ENCODE measurements at regions of chr20 and their contacts with region 1.

Region 1: DNA sequence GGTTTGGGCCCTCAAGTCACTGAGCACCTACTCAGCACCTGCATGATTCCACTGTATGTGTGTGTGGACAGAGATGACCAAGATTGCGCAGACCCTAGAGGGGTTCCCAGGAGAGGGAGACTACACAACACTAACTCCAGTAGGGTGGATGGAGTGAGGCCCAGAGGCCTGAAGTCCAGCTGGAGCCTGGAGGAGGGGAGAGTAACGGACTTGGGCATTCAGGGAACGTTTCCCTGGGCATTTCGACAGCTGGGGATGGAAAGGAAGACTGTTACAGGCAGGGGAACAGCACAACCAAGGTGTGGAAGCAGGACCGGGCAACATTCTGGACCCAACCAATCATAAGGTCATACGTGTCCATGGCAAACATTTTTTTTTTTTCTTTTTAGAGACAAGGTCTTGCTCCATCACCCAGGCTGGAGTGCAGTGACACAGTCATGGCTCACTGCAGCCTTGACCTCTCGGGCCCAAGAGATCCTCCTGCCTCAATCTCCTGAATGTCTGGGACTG is 11.1 kb upstream of the CEBPB start:
- DNase-seq: no peak
- H3K4me3 ChIP-seq: no peak overlapping the region
- H3K27ac ChIP-seq: no peak overlapping the region
- H3K27me3 ChIP-seq: no peaks in the 10 kb centered on the region
- CTCF ChIP-seq: no peak

Region 2: DNA sequence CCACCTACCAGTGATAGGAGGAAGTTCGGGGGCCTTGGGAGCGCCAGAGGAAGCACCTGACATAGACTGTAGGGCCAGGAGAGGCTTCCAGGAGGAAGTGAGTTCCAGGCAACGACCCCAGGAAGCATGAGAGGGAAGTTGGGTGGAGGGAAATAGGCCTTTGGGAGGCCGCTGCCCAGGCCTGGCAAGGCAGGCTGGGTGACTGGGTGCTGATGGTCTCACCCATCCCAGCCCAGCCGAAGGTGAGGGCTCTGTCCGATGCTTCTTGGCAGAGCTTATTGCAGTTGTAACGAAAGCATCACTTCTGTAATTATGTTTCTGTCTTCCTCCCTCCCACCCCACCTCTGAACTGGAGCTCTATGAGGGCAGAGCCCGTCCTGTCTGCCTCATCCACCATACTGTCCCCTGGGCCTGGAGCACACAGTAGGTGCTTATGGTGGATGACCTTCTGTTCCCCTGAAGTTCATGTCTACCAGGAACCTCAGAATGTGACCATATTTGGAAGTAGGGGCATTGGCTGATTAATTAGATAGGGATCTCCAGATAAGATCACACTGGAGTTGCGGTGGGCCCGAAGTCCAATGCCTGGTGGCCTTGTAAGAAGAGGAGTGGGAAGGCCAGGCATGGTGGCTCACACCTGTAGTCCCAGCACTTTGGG is 120.7 kb before region 1 on chr20:
- CTCF ChIA-PET with region 1: no interaction called
- POLR2A ChIA-PET with region 1: no interaction called
- DNase-seq: no peak
- H3K4me3 ChIP-seq: no peak overlapping the region
- H3K27ac ChIP-seq: no peak overlapping the region
- H3K27me3 ChIP-seq: no peaks in the 10 kb centered on the region
- CTCF ChIP-seq: no peak

Region 3: GRCh38 chr20:50115591-50116372 is 63.8 kb before region 1 on chr20:
- CTCF ChIA-PET with region 1: interaction called, 19 read pairs
- POLR2A ChIA-PET with region 1: interaction called, 4 read pairs
- DNase-seq: peak; percentile 92
- H3K4me3 ChIP-seq: peak overlapping the region; percentile 65
- H3K27ac ChIP-seq: peak overlapping the region; percentile 31
- H3K27me3 ChIP-seq: no peaks in the 10 kb centered on the region
- CTCF ChIP-seq: no peak

Region 4: DNA sequence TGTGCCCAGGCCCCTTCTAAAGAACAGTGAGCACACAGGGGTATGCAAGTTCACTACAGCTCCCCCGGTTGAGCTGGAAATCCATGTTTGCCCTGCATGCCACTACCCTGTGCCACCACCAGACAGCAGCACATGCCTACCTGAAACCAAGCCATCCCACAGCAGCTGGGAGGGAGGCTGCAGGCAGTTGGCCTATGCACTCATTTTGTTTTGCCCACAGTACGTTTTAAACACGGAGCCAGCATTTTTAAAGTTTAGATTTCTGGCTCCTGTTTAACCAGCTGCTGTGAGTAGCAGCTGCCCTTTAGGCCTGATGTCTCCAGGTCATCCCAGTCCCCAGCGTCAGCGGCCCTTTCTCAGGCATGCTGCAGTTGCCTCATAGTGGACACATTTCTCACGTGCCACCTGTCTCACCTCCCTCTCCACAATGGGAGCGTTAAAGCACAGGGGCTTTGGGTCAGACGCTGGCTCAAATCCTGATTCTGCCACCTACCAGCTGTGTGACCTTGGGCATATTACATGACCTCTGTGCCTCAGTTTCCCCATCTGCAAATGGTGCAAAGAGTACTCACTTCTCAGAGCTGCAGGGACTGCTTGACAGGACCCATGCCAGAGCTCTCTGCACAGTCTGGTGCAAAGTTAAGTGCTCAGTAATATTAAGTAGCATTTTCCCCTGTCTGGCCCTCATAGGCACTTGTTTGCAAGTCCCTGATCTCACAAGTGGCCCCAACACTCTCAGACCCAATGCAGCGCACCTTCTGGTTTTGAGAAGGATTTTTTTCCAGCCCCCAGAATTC is 58.5 kb before region 1 on chr20:
- CTCF ChIA-PET with region 1: interaction called, 19 read pairs
- POLR2A ChIA-PET with region 1: interaction called, 4 read pairs
- DNase-seq: peak; percentile 36
- H3K4me3 ChIP-seq: no peak overlapping the region
- H3K27ac ChIP-seq: no peak overlapping the region
- H3K27me3 ChIP-seq: no peaks in the 10 kb centered on the region
- CTCF ChIP-seq: peak; percentile 84

Region 5: DNA sequence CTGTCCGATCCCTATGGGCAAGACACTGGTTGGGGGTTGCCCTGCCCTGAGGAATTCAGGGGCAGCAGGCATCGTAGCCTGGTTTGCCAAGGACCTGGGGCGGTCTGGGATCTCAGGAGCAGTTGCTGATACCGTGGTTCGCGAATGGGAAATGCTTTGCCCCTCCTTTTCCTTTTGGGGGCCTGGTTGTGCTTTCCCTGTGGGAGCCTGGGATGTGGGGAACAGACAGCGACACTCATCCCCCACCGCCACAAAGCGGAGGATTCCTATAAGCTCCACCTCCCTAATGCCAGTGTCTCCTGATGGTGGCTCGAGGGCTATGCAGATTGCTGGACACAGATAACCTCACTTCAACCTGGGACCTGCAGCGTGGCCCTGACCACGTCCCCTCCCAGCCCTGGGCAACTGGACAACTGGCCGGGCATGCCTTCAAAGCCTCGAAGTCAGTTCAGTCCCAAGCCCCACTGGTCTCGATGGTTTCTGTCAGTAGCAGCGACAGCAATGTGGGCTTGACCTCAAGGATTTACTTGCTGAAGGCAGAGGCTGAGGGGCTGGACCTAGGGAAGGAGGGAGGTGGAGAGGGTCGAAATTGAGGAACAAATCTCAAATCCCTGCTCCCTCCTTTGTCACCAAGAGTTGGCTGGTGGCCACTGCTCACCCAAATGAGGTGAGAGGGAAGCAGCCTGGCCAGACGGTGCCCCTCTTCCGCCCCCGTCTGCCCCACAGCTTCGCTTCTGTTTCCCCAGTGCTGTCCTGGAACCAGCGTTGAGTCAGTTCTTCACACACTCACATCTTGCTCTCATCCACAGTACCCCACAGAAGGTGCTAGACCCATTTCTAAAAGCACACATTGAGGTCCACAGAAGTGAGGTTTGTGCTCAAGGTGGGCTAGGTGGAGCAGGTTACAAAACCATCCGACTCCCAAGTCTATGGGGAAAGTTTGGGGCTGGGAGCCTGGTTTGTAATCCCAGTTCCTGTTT is 14.6 kb after region 1 on chr20:
- CTCF ChIA-PET with region 1: no interaction called
- POLR2A ChIA-PET with region 1: no interaction called
- DNase-seq: no peak
- H3K4me3 ChIP-seq: peak overlapping the region; percentile 97
- H3K27ac ChIP-seq: peak overlapping the region; percentile 96
- H3K27me3 ChIP-seq: no peaks in the 10 kb centered on the region
- CTCF ChIP-seq: no peak

Region 6: DNA sequence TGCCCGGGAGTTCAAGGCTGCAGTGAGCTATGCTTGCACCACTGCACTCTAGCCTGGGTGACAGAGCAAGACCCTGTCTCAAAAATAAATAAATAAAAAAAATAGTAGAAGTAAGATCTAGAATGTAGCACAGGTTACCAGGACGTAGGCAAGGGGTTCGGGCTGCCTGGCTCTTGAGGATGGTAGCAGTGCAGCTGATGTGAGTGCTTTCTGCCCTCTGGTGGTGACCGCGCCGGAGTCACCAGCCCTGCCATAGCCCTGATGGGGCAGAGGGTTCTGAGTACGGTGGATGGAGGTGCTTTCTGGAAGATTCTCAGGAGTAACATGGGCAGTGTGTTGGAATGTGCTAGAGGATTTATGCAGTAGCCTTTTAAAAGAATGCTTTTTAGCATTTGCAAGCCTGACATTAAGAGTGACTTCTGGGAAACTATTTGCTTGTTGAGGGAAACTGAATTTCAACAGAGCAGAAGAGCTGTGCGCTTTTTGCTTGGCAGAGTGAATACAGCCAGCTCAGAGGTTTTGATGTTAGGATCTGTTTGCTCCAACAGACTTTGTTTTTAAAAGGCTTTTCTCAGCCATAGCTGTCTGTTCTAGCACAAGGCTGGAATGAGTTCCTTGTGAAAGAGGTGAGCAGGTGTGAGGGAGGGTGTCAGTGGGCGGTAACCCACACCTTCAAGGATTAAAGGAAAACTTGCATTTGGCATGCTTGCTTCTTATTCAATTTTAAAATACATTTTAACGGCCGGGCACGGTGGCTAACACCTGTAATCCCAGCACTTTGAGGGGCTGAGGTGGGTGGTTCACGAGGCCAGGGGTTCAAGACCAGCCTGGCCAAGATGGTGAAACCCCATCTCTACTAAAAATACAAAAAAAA is 396.5 kb after region 1 on chr20:
- CTCF ChIA-PET with region 1: interaction called, 11 read pairs
- POLR2A ChIA-PET with region 1: no interaction called
- DNase-seq: no peak
- H3K4me3 ChIP-seq: no peak overlapping the region
- H3K27ac ChIP-seq: peak overlapping the region; percentile 31
- H3K27me3 ChIP-seq: no peaks in the 10 kb centered on the region
- CTCF ChIP-seq: peak; percentile 81